Vagina (tissue), 2 donors: ENCODE measurements at regions of chr11 and their contacts with region 1.

Region 1: GRCh38 chr11:4072668-4073285 is 21.8 kb upstream of the RRM1 start:
- DNase-seq: no peak
- H3K4me3 ChIP-seq: no peak overlapping the region
- H3K27ac ChIP-seq: no peak overlapping the region
- H3K4me1 ChIP-seq: peaks cover 17% of the 10 kb centered on the region
- H3K27me3 ChIP-seq: no peaks in the 10 kb centered on the region
- CTCF ChIP-seq: peak; percentile 90 to 94 (median 92)
- POLR2A ChIP-seq: no peak

Region 2: GRCh38 chr11:3849297-3849874 is 223.4 kb before region 1 on chr11:
- intact Hi-C with region 1: loop called (anchors 2 kb)
- DNase-seq: no peak
- H3K4me3 ChIP-seq: no peak overlapping the region
- H3K27ac ChIP-seq: no peak overlapping the region
- H3K4me1 ChIP-seq: peaks cover 14% of the 10 kb centered on the region
- H3K27me3 ChIP-seq: no peaks in the 10 kb centered on the region
- CTCF ChIP-seq: peak; percentile 26 to 64 (median 61)
- POLR2A ChIP-seq: no peak